SK-N-SH (cell line): ENCODE measurements at regions of chr2 and their contacts with region 1.

Region 1: DNA sequence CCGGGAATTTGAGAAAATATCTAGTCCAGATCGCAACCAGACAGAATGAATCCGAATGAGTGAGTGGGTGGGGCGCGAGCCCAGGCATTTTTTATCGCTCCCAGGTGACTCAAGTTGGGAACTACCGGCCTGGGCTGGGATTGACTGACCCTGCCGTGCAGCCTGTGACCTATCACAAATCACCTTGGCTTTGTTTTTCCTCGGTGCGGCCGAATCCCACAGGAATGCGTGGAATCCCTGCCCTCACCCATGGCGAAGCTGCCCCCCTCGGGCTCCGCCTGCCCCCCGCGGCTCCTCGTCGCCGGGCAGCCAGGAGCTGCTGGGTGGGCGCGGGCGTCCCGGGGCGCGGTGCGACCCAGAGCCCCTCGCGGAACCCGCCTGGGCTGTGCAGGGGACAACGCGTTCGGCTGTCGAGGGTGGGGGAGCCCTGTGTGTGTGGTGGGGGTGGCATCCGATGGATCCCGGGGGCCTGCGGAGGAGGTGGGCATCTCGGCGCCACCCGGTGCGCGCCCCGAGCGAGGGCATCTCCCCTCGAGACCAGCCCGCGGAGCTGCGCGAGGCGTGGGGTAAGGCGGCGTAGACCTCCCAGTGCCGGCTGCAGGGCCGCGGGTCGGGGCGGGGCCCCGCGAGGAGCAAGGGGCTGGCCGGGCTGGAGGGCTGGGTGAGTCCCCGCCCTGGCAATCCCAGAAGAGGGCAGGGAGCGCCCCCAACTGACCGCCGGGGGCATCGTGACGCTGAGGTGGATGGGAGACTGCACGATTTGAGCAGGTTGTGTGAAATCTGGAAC is 16.5 kb downstream of the B3GNT7 start:
- DNase-seq: peak; percentile 97
- H3K4me3 ChIP-seq: peak overlapping the region; percentile 64 to 70
- H3K27ac ChIP-seq: peak overlapping the region; percentile 16 to 40; a peak in 2 of 4 replicates
- H3K4me1 ChIP-seq: peaks cover 3% of the 10 kb centered on the region in 2 experiments; a peak in 1 of 4 replicates
- H3K27me3 ChIP-seq: no peaks in the 10 kb centered on the region
- CTCF ChIP-seq: peak; percentile 94
- EP300 ChIP-seq: no peak
- RAD21 ChIP-seq: peak; percentile 95

Region 2: DNA sequence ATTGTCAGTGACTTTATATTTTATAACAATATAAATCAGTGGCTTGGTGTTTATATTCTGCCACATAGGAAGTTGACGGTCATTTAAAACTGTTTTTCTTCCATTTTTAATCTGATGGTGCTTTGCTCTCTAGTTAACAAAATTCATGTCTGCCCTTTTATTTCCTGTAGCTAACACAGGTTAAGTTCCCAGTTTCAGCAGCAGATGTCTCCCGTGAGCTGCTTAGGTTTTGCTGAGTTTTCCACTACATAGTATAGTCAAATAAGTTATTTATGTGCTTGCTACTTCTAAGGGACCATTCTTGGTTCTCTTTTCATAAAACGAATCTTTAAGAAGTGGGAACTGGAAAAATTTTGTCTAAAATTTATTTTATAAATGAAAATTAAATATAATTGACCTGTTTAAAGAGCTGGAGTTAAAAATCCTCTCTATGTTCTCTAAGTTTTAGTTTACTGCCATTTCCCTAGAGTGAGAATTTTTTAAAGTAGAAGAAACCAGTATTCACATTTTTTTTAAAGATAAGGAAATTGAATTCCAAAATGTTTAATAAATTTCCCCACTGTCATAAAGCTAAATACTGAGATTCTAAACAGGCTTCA is 307.8 kb before region 1 on chr2:
- CTCF ChIA-PET with region 1: interaction called, 37 read pairs
- POLR2A ChIA-PET with region 1: no interaction called
- DNase-seq: peak; percentile 42
- H3K4me3 ChIP-seq: no peak overlapping the region
- H3K27ac ChIP-seq: peak overlapping the region; percentile 54 to 60; a peak in 2 of 4 replicates
- H3K4me1 ChIP-seq: peaks cover 0 to 4% of the 10 kb centered on the region in 2 experiments; a peak in 2 of 4 replicates
- H3K27me3 ChIP-seq: no peaks in the 10 kb centered on the region
- CTCF ChIP-seq: peak; percentile 89
- EP300 ChIP-seq: no peak
- RAD21 ChIP-seq: peak; percentile 95

Region 3: DNA sequence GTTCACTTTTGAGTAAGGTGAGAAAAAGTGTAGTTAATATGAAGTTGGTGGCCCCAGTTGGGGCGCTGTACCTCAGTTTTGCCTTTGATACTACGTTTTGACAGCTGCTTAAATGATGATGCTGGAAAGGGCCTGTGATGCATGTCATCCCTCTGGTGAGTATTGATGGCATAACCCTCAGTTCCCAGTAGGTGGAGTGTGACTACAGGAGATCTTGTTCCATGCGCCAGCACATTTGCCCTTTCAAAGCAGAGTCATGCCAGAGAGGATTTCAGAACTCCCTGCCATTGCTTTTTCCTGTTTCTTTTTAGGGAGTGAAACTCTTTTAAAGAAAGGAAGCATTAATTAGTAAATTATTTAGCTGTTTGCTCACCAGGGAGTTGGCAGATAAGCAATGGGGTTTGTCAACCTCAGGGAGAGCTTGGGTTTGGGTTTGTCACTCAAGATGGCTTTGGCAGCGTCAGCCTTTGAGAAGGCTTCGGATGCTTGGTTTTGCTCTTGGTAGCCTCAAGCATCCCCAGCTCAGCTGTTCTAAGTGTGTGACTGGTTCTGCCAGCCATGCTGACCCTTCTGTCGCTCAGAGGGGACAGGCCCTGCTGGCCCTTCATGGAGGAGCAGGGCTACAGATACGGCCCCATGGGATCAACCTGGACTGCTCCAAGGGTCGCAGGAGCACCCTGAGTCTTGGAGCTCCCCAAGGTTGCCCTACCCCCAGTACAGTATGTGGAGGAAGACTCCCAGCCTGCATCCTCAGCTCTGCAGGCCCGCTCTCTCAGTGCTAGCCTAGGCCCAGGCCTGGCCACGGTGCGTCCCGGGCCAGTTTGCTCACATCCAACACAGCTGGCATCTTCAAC is 184.5 kb before region 1 on chr2:
- CTCF ChIA-PET with region 1: interaction called, 250 read pairs
- POLR2A ChIA-PET with region 1: no interaction called
- DNase-seq: peak; percentile 85
- H3K4me3 ChIP-seq: peak overlapping the region in 1 of 2 experiments; percentile 45; a peak in 1 of 4 replicates
- H3K27ac ChIP-seq: no peak overlapping the region; a peak in 1 of 4 replicates
- H3K4me1 ChIP-seq: peaks cover 0 to 15% of the 10 kb centered on the region in 2 experiments; a peak in 2 of 4 replicates
- H3K27me3 ChIP-seq: no peaks in the 10 kb centered on the region
- CTCF ChIP-seq: peak; percentile 80
- EP300 ChIP-seq: no peak
- RAD21 ChIP-seq: peak; percentile 94

Region 4: GRCh38 chr2:231260442-231261208 is 151.4 kb before region 1 on chr2:
- CTCF ChIA-PET with region 1: interaction called, 10 read pairs
- POLR2A ChIA-PET with region 1: no interaction called
- DNase-seq: no peak
- H3K4me3 ChIP-seq: no peak overlapping the region
- H3K27ac ChIP-seq: no peak overlapping the region
- H3K4me1 ChIP-seq: no peaks in the 10 kb centered on the region
- H3K27me3 ChIP-seq: no peaks in the 10 kb centered on the region
- CTCF ChIP-seq: no peak
- EP300 ChIP-seq: no peak
- RAD21 ChIP-seq: no peak

Region 5: DNA sequence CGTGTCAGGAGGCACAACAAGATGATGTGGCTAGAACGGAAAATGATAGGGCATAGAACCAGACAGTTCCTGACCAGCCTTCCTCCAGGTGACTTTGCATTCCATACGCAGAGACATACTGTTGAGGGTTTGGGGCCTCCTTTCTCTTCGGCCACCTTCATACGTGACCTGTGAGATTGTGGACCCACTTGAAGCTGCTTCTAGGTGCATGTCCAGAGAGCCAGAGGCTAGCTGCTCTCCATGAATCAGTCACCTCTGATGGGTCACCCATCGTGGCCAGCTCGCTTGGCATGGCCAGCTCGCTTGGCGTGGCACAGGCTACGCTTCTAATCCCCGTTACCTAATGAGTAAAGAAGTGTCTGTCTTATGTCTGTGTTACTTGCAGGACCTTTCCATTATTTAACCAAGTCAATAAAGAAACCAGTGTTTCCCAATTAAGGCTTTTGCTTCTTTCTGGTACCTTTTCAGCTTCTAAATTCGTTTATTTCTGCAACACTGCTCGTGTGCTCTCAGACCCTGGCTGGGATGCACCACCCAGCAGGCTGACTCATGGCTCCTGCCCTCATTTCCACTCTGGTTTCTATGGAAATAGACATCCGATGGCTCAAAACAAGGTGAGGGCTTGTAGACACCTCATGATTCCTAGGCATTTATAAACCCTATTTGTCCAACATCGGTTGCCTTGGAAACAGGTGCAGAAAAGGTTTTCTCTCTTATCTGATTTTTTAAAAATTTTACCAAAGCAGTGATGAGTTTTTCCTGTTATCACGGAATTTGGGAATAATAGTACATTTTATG is 103.2 kb before region 1 on chr2:
- CTCF ChIA-PET with region 1: interaction called, 28 read pairs
- POLR2A ChIA-PET with region 1: no interaction called
- DNase-seq: no peak
- H3K4me3 ChIP-seq: no peak overlapping the region
- H3K27ac ChIP-seq: peak overlapping the region in 1 of 2 experiments; percentile 64; a peak in 2 of 4 replicates
- H3K4me1 ChIP-seq: peaks cover 0 to 5% of the 10 kb centered on the region in 2 experiments; a peak in 1 of 4 replicates
- H3K27me3 ChIP-seq: no peaks in the 10 kb centered on the region
- CTCF ChIP-seq: no peak
- EP300 ChIP-seq: no peak
- RAD21 ChIP-seq: no peak

Region 6: DNA sequence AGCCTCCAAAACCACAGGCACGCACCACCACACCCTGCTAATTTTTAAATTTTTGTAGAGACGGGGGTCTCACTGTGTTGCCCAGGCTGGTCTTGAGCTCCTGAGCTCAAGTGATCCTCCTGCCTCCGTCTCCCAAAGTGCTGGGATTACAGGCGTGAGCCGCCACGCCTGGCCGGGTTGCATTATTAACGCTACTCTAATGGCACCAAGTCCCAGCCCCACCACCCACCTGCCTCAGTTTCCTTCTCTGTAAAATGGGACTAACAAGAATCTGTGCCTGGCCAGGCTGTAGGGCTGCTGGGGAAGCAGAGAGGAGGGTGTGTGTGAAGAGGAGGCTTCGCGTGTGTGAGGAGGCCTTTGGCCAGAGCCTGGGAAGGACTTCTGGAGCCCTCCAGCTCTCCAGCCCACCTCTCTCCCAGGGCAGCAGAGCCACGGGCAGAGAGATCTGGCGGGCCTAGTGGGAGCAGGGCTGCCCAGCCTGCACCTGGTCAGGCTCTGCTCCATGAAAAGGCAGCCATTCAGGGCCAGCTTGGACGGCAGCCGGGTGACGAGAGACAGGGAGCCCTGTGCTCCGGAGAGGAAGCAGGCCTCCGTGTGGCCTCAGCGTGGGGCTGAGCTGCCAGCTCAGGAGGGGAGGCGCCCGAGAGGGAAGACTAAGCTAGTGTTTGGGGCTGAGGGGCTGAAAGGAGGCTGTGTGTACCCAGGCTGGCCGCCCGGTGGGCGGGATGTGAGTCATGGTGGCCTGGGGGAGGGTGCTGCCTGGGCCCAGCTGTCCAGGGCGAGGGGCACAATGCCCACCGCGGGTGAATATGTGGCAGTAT is 23.9 kb before region 1 on chr2:
- CTCF ChIA-PET with region 1: no interaction called
- POLR2A ChIA-PET with region 1: no interaction called
- DNase-seq: peak; percentile 70
- H3K4me3 ChIP-seq: no peak overlapping the region
- H3K27ac ChIP-seq: peak overlapping the region; percentile 16 to 32; a peak in 2 of 4 replicates
- H3K4me1 ChIP-seq: peaks cover 6 to 34% of the 10 kb centered on the region in 2 experiments; a peak in 2 of 4 replicates
- H3K27me3 ChIP-seq: no peaks in the 10 kb centered on the region
- CTCF ChIP-seq: no peak
- EP300 ChIP-seq: no peak
- RAD21 ChIP-seq: no peak; the same call in 1 of the 2 replicates

Region 7: DNA sequence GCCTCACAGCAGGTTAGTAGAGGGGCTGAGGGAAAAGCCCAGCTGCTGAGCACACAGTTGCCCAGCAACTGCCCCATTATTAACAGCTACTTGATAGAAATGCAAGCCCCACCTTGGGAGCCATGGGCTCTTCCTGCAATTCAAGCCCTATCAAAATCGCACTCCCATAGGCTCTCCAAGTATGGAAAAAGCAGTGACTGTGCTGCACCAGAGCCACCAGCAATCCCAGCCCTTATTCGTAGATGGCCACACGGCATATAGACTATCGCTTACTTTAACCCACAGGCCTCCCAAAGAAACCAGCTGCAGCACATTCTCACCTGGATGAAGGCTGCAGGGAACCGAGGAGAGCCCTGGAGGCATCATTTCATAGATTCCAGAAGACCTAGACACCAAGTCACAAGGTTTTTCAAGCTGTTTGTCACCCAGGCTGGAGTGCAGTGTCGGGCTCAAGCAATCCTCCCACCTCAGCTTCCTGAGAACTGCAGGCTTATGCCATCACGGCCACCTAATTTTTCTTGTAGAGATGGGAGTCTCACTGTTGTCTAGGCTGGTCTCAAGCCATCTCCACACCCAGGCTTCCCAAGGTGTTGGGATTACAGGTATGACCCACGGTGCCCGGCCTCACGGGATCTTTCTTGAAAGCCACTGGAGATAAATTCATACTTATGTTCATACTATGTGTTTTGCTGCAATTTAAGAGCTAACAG is 40.9 kb after region 1 on chr2:
- CTCF ChIA-PET with region 1: interaction called, 44 read pairs
- POLR2A ChIA-PET with region 1: no interaction called
- DNase-seq: no peak
- H3K4me3 ChIP-seq: no peak overlapping the region
- H3K27ac ChIP-seq: no peak overlapping the region
- H3K4me1 ChIP-seq: no peaks in the 10 kb centered on the region
- H3K27me3 ChIP-seq: no peaks in the 10 kb centered on the region
- CTCF ChIP-seq: no peak
- EP300 ChIP-seq: no peak
- RAD21 ChIP-seq: no peak